Gastrocnemius medialis (tissue), 4 donors: ENCODE measurements at regions of chr1 and their contacts with region 1.

Region 1: GRCh38 chr1:158998781-158999161 is 10.9 kb upstream of the IFI16 start:
- DNase-seq: no peak
- ATAC-seq: peak in 1 of 2 donors; percentile 37
- H3K4me3 ChIP-seq: peak overlapping the region; percentile 50 to 64 (median 56)
- H3K27ac ChIP-seq: peak overlapping the region; percentile 69 to 86 (median 74)
- H3K4me1 ChIP-seq: peaks cover 0 to 6% of the 10 kb centered on the region in 2 donors
- H3K27me3 ChIP-seq: no peaks in the 10 kb centered on the region
- CTCF ChIP-seq: peak; percentile 69 to 84 (median 73)
- POLR2A ChIP-seq: no peak

Region 2: GRCh38 chr1:157963713-157964112 is 1035.1 kb before region 1 on chr1:
- in situ Hi-C with region 1: loop called in 2 of 4 experiments (anchors 10 to 25 kb)
- intact Hi-C with region 1: loop called (anchors 10 kb)
- DNase-seq: peak; percentile 4 to 23
- ATAC-seq: peak; percentile 44 to 54
- H3K4me3 ChIP-seq: no peak overlapping the region
- H3K27ac ChIP-seq: no peak overlapping the region
- H3K4me1 ChIP-seq: peaks cover 0 to under 1% of the 10 kb centered on the region in 2 donors
- H3K27me3 ChIP-seq: peaks cover 0 to 8% (median 8%) of the 10 kb centered on the region in 3 donors
- CTCF ChIP-seq: peak; percentile 38 to 87 (median 78)
- POLR2A ChIP-seq: no peak

Region 3: DNA sequence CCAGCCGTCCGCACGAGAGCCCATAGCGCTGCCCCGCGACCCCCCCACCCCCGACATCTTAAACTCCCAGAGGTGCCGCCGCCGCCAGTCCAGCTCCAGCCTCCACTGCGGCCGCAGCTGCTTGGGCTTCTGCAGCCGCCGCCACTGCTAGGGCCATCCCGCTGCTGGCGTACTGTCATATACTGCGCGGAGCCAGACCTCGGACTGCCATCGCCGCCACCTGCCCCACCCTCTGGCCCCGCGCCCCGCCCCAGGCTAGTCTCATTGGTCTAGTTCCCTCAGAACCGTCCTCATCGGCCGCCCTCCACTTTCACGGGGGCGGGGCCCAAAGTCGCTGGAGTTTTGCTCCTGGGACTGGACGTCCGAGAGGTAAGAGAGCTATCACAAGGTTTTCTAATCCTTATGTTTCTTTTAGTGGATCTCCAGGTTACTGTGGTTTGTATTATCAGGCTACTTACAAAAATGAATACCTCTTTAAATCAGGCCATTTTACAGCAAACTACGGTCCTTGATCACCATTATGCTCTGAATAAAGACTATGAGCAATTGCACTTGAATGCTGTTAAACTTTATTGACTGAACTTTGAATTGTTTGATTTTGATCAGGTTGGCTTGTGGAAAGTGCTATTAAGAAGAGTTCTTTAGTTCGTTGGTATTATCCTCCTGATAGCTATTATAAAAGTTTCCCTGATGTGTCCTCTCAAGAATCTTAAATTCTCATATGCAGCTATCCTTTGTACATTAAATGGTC is 820.9 kb before region 1 on chr1:
- in situ Hi-C with region 1: loop called in 1 of 4 experiments (anchors 25 kb)
- intact Hi-C with region 1: no loop called
- DNase-seq: peak; percentile 85 to 91
- ATAC-seq: peak; percentile 91 to 92
- H3K4me3 ChIP-seq: peak overlapping the region; percentile 56 to 64 (median 58)
- H3K27ac ChIP-seq: peak overlapping the region; percentile 32 to 71 (median 60)
- H3K4me1 ChIP-seq: peaks cover 10 to 32% of the 10 kb centered on the region in 2 donors
- H3K27me3 ChIP-seq: peaks cover 0 to 6% (median 5%) of the 10 kb centered on the region in 3 donors
- CTCF ChIP-seq: no peak
- POLR2A ChIP-seq: peak in 1 of 2 donors; percentile 16

Region 4: DNA sequence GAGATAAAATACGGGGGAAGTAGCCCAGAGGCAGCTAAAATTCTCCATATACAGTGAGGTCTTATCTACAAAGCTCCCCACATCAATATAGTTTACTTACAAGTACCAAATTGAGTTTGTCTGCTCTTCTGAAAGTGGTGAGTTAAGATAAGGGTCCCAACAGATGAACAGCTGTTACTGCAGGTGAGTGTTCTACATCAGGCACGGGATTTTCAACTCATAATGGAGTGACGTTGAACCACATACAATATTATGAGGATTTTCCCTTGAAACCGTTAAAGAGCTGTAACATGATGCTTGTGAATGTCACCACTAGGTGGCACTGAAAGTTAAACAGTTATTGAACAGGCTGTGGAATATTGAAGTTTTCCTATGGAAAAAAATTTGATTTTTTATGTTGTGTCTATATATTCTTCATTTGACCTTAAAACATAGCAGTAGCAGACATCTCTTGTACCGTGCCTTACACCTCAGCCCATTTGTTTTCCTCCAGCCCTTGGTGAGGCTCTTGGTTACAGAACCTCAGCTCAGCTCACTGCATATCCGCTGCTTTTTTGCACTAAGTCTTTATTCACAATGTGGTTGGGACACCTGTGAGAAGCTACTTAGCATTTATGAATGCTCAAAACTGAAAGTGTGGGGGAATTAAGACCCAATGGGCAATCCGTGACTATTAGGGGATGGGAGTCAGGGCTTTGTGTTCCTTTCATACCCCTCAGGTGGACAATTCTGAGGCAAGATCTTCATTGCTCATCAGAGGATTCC is 794.9 kb before region 1 on chr1:
- in situ Hi-C with region 1: loop called in 3 of 4 experiments (anchors 10 to 25 kb)
- intact Hi-C with region 1: loop called (anchors 5 kb)
- DNase-seq: no peak
- ATAC-seq: peak; percentile 47 to 58
- H3K4me3 ChIP-seq: no peak overlapping the region
- H3K27ac ChIP-seq: no peak overlapping the region
- H3K4me1 ChIP-seq: no peaks in the 10 kb centered on the region
- H3K27me3 ChIP-seq: no peaks in the 10 kb centered on the region
- CTCF ChIP-seq: peak in 4 of 5 experiments; percentile 48 to 78 (median 61)
- POLR2A ChIP-seq: no peak

Region 5: DNA sequence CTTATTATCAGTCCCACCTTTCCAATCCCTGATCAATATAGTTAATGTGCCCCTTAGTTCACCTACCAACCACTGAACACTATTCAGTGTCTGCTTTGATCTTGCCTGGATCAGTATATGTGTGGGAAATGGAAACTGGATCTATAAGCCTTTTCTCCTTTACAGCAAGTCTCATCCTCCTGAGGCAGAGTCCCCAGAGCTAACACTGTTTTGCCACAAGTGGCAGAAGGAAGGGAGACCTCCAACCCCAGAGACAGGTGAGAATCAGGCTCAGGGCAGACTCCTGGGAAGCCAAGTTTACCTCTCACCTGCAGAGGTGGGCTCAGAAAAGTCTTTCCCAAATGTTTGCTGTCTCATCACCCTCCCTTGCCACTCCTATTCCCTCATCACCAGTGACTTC is 217.7 kb before region 1 on chr1 and contains the start of gene OR6N2:
- in situ Hi-C with region 1: no loop called
- intact Hi-C with region 1: no loop called
- DNase-seq: no peak
- ATAC-seq: no peak
- H3K4me3 ChIP-seq: no peak within 1 kb of the TSS
- H3K27ac ChIP-seq: no peak within 1 kb of the TSS
- H3K4me1 ChIP-seq: no peaks in the 10 kb centered on the region
- H3K27me3 ChIP-seq: no peaks in the 10 kb centered on the region
- CTCF ChIP-seq: no peak
- POLR2A ChIP-seq: no peak
- total RNA-seq, gene OR6N2: not detected

Region 6: DNA sequence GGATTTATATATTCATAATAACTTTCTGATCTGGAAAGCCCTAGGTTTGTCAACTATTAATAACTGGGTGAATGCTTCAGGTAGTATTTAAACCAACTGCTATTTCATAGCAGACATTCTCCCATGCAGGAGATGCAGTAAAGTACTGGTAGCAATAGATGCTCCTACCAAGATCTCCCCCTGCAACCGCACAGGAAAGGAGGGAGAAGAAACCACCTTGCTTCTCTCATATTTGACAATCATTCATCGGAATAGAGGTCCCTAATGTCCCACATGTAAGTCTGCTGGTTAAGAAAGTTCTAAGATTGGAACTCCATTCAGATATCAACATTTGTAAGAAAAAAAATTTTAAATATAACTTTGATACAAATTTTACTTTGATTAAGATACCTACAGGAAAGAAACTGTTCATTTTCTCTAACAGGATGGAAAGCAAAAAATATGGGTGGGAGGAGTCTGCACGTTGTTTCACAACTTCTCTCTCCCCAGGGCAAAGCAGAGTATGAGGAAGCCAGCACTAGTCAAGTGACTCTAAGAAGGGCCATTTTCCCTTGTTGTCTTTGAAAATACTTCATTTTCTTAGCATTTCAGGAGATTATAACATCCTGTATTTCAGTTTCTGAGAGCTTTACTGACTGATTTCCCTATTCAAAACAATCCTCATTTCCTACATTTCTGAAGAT is 67.6 kb before region 1 on chr1 and contains the start of gene PYHIN1:
- in situ Hi-C with region 1: loop called in 1 of 4 experiments (anchors 10 kb)
- intact Hi-C with region 1: no loop called
- DNase-seq: no peak
- ATAC-seq: no peak
- H3K4me3 ChIP-seq: no peak within 1 kb of the TSS
- H3K27ac ChIP-seq: no peak within 1 kb of the TSS
- H3K4me1 ChIP-seq: no peaks in the 10 kb centered on the region
- H3K27me3 ChIP-seq: no peaks in the 10 kb centered on the region
- CTCF ChIP-seq: no peak
- POLR2A ChIP-seq: no peak
- total RNA-seq, gene PYHIN1: 0.16 TPM in 1 of 4 donors, not detected in the others

Region 7: DNA sequence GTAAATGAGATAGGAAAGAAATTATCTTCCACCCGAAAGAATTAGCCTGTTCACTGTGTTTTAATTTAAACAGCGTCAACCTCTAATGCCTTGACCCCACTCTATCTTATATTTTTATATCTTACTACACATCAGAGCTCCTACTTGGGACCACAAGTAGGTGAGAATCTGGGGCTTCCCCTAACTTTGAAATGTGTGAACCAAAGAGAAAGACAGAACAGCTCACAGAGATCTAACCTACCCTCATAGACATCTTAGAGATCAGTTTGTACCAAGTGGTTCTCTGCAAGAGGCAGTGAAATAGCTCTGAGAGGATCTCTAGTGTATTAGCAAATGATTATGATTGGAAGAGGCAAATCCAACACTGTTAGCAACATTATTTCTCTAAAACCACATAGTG is 20.0 kb before region 1 on chr1:
- in situ Hi-C with region 1: no loop called
- intact Hi-C with region 1: no loop called
- DNase-seq: no peak
- ATAC-seq: no peak
- H3K4me3 ChIP-seq: no peak overlapping the region
- H3K27ac ChIP-seq: no peak overlapping the region
- H3K4me1 ChIP-seq: no peaks in the 10 kb centered on the region
- H3K27me3 ChIP-seq: no peaks in the 10 kb centered on the region
- CTCF ChIP-seq: no peak
- POLR2A ChIP-seq: no peak

Region 8: GRCh38 chr1:159009704-159010361 is 11.1 kb after region 1 on chr1 and contains the start of gene IFI16:
- in situ Hi-C with region 1: no loop called
- intact Hi-C with region 1: no loop called
- DNase-seq: peak; percentile 30 to 43
- ATAC-seq: peak; percentile 84 to 91
- H3K4me3 ChIP-seq: peak within 1 kb of the TSS; percentile 53 to 59 (median 58)
- H3K27ac ChIP-seq: peak within 1 kb of the TSS; percentile 66 to 81 (median 76)
- H3K4me1 ChIP-seq: peaks cover 0 to 6% of the 10 kb centered on the region in 2 donors
- H3K27me3 ChIP-seq: no peaks in the 10 kb centered on the region
- CTCF ChIP-seq: no peak
- POLR2A ChIP-seq: peak; percentile 60 to 86
- total RNA-seq, gene IFI16: 13.5 to 18.5 (median 14.2) TPM